Ascending aorta (tissue), 2 donors: ENCODE measurements at regions of chr16 and their contacts with region 1.

Region 1: GRCh38 chr16:74431516-74431915 is 10.2 kb upstream of the CLEC18B start:
- DNase-seq: no peak
- H3K4me3 ChIP-seq: no peak overlapping the region
- H3K27ac ChIP-seq: no peak overlapping the region
- H3K4me1 ChIP-seq: no peaks in the 10 kb centered on the region
- H3K27me3 ChIP-seq: no peaks in the 10 kb centered on the region
- CTCF ChIP-seq: no peak

Region 2: GRCh38 chr16:74309789-74310781 is 121.4 kb before region 1 on chr16:
- intact Hi-C with region 1: loop called (anchors 5 kb)
- DNase-seq: no peak
- H3K4me3 ChIP-seq: no peak overlapping the region
- H3K27ac ChIP-seq: no peak overlapping the region
- H3K4me1 ChIP-seq: no peaks in the 10 kb centered on the region
- H3K27me3 ChIP-seq: no peaks in the 10 kb centered on the region
- CTCF ChIP-seq: peak; percentile 42 to 63 (median 43)

Region 3: GRCh38 chr16:74451951-74452758 is 20.6 kb after region 1 on chr16:
- intact Hi-C with region 1: no loop called
- DNase-seq: no peak
- H3K4me3 ChIP-seq: no peak overlapping the region
- H3K27ac ChIP-seq: no peak overlapping the region
- H3K4me1 ChIP-seq: peaks cover 6 to 10% of the 10 kb centered on the region in 2 donors
- H3K27me3 ChIP-seq: no peaks in the 10 kb centered on the region
- CTCF ChIP-seq: no peak

Region 4: GRCh38 chr16:74984206-74984534 is 552.7 kb after region 1 on chr16:
- intact Hi-C with region 1: no loop called
- DNase-seq: no peak
- H3K4me3 ChIP-seq: peak overlapping the region; percentile 81 to 83
- H3K27ac ChIP-seq: peak overlapping the region in 1 of 2 donors; percentile 73
- H3K4me1 ChIP-seq: peaks cover 0 to 9% of the 10 kb centered on the region in 2 donors
- H3K27me3 ChIP-seq: no peaks in the 10 kb centered on the region
- CTCF ChIP-seq: no peak